PC-9 (cell line): ENCODE measurements at regions of chr5 and their contacts with region 1.

Region 1: GRCh38 chr5:74394916-74395781 is 245.4 kb downstream of the ENC1 start:
- DNase-seq: peak; percentile 91 to 99
- H3K4me3 ChIP-seq: no peak overlapping the region; the same call in 1 of the 2 replicates
- H3K27ac ChIP-seq: peak overlapping the region; percentile 82
- H3K4me1 ChIP-seq: peaks cover 42% of the 10 kb centered on the region
- H3K27me3 ChIP-seq: no peaks in the 10 kb centered on the region
- CTCF ChIP-seq: peak; percentile 61

Region 2: GRCh38 chr5:73902327-73903051 is 492.7 kb before region 1 on chr5:
- CTCF ChIA-PET with region 1: no interaction called
- POLR2A ChIA-PET with region 1: no interaction called
- intact Hi-C with region 1: loop called (anchors 2 kb)
- DNase-seq: no peak
- H3K4me3 ChIP-seq: no peak overlapping the region
- H3K27ac ChIP-seq: peak overlapping the region; percentile 89
- H3K4me1 ChIP-seq: peaks cover 44% of the 10 kb centered on the region
- H3K27me3 ChIP-seq: no peaks in the 10 kb centered on the region
- CTCF ChIP-seq: peak; percentile 92

Region 3: DNA sequence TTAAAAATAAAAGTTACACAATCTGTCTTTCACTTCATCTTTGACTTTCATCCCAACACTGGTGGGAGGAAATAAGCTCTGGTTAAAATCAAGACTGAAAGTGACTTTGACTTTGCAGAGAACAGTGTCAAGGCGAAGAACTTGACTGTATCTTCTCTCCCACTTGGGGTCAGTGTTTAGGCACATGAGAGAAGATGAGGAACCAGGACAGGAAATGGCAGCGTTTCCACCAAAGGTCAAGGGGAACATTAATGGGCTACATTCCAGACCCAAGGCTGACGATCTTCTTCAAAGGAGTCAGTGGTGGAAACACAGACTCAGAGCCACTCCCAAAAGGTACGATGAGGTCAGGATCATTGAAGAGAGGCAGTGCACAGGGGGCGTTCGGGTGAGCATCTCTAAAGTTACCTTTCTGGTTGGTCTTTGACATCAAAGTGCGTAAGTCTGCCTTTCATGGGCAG is 359.6 kb before region 1 on chr5:
- CTCF ChIA-PET with region 1: interaction called, 4 read pairs
- POLR2A ChIA-PET with region 1: interaction called, 3 read pairs
- intact Hi-C with region 1: loop called (anchors 1 kb)
- DNase-seq: peak; percentile 69 to 83
- H3K4me3 ChIP-seq: no peak overlapping the region
- H3K27ac ChIP-seq: peak overlapping the region; percentile 58
- H3K4me1 ChIP-seq: peaks cover 18% of the 10 kb centered on the region
- H3K27me3 ChIP-seq: no peaks in the 10 kb centered on the region
- CTCF ChIP-seq: peak; percentile 65

Region 4: DNA sequence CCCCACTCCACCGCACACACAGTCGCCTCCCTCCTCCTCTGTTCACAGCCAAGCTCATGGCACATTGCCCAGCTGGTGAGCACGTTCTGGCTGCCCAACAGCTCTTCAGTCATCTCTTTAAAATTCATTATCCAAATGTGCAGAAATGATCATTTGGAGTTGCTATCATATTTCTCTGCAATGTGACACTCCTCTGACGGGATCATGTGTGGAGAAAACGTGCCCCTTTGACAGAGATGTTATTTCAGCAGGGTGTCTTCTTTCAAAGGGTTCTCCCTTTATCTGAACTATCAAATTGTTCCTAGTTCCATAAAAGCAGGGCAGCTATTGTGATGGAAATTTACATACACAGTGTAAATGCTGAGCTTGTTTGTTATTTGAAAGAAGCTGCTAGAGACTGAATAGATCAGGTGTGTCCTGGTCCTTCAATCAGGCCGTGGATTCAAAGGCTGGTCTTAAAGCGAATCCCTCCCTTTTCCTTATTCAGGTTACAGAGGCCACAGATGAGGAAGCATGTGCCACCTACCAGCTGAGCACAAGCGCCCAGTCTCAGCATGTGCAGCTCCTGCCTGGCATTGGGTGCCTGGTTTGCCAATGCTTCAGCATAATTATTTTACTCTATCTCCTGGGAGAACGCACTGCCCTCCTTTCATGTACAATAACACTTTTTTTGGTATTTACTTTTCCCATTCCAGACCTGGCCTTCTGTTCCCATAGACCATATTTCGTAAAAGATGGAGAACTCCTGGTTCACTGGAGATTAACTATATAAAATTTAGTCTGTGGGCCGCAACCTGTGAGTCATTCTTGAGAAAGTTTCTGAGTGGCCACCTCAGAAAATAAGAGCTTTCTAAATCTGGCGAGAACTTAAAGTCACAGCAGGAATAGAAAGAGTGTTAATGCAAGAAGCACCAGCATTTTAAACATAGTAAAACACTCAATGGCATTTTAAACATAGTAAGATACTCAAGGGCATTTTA is 188.3 kb before region 1 on chr5:
- CTCF ChIA-PET with region 1: no interaction called
- POLR2A ChIA-PET with region 1: no interaction called
- intact Hi-C with region 1: loop called (anchors 1 kb)
- DNase-seq: peak in 1 of 2 experiments; percentile 74
- H3K4me3 ChIP-seq: no peak overlapping the region
- H3K27ac ChIP-seq: no peak overlapping the region
- H3K4me1 ChIP-seq: peaks cover 18% of the 10 kb centered on the region
- H3K27me3 ChIP-seq: no peaks in the 10 kb centered on the region
- CTCF ChIP-seq: no peak

Region 5: DNA sequence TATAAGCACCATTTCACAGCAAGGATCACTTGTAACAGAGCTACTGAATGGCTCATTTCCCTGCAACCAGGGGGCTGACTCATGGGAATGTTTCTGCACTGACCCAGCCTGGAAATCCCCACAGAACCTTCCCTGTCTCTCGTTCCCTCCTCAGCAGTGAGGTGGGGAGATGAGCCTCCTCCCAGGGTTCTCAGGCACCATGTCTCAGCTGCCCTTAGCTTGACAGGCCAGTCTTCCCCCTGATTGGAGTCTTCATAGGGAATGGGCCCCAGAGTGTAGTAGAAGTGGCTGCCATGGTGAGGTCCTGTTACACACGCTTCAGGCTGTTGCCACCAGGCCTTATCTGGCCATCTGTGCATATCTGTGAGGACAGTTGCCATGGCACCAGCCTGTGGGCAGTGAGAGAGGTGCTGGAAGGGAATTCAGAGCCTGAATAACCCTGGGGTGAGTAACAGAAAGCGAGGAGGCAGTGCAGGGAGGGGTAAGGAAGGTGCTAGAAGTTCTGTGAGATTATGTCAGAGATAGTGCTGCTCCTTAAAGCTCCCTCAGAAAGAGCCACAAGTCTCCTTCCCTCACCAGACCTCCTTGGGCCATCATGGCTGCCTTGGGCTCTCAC is 79.0 kb before region 1 on chr5:
- CTCF ChIA-PET with region 1: interaction called, 5 read pairs
- POLR2A ChIA-PET with region 1: no interaction called
- intact Hi-C with region 1: loop called (anchors 1 kb)
- DNase-seq: peak; percentile 94 to 98
- H3K4me3 ChIP-seq: no peak overlapping the region
- H3K27ac ChIP-seq: peak overlapping the region; percentile 98
- H3K4me1 ChIP-seq: peaks cover 65% of the 10 kb centered on the region
- H3K27me3 ChIP-seq: no peaks in the 10 kb centered on the region
- CTCF ChIP-seq: no peak

Region 6: GRCh38 chr5:74516211-74516636 is 121.1 kb after region 1 on chr5:
- CTCF ChIA-PET with region 1: interaction called, 4 read pairs
- POLR2A ChIA-PET with region 1: no interaction called
- intact Hi-C with region 1: loop called (anchors 1 kb)
- DNase-seq: no peak
- H3K4me3 ChIP-seq: no peak overlapping the region
- H3K27ac ChIP-seq: no peak overlapping the region
- H3K4me1 ChIP-seq: peaks cover 36% of the 10 kb centered on the region
- H3K27me3 ChIP-seq: no peaks in the 10 kb centered on the region
- CTCF ChIP-seq: no peak